ENCODE measurements at regions of chr14 and their contacts with region 1.

Region 1: DNA sequence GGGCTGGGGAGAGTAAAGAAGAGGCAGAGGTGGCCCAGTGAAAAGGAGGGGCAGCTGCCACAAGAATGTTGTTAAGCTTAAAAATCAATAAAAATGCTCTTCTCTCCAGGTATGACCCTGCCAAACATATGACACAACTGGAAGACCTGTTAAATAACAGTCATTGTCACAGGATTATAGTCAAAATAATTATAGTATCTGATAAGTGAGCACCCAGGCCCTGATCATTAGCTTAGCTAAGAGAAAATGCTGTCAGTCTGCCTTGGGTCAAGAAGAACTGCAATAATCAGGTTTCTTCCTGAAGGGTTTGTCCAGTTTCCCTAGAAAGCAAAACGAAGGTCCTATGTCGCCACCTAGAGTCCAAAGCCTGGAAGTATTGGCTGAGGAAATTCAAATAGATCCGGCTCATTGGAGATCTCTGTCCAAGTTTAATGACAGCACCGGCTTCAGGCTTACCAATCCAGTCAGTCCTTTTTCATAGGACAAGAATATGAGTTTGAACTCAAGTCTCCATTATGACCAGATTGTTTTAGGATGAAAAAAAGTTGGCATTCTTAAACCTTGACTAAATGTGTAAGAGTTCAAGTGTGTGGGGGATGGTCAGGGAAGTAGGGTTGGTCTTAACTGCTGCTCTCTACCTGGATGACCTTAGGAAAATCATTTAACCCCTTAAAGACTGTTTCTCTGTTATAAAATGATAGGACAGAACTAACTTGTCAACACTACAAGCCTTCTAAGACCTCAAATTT is 22.5 kb upstream of the NKX2-8 start:
- DNase-seq: peak; percentile 76
- H3K27ac ChIP-seq: no peak overlapping the region
- CTCF ChIP-seq: peak; percentile 82

Region 2: GRCh38 chr14:36505892-36506731 is 98.8 kb before region 1 on chr14:
- CTCF ChIA-PET with region 1: no interaction called
- POLR2A ChIA-PET with region 1: no interaction called
- DNase-seq: no peak
- H3K27ac ChIP-seq: no peak overlapping the region
- CTCF ChIP-seq: no peak

Region 3: DNA sequence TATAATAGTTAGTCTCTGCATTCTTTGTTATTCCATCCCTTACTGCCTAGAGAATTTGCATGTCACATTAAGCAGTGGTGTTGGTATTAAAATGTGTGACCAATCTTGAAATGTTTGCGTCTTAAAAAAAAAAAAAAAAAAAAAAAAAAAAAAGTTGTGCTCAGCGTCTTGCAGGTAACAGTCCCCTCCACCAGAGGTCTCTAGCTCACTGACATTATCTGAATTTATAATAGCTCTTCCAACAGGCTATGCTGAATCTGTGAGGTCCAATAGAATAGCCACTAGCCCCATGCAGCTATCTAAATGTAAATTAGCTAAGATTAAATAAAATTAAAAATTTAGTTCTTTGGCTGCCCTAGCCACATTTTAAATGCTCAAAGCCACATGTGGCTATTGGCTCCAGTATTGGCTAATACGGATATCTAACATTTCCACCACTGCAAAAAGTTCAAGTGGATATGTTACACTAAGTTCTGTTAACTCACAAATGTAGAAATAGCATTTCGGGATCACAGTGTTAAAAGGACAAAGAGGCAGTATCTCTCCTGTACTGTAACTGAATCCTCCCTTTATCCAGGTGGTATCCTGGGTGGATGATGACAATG is 51.2 kb before region 1 on chr14:
- CTCF ChIA-PET with region 1: interaction called, 21 read pairs
- POLR2A ChIA-PET with region 1: no interaction called
- DNase-seq: peak; percentile 55
- H3K27ac ChIP-seq: no peak overlapping the region
- CTCF ChIP-seq: peak; percentile 74

Region 4: GRCh38 chr14:36570065-36570464 is 34.9 kb before region 1 on chr14:
- CTCF ChIA-PET with region 1: no interaction called
- POLR2A ChIA-PET with region 1: no interaction called
- DNase-seq: peak; percentile 8
- H3K27ac ChIP-seq: no peak overlapping the region
- CTCF ChIP-seq: no peak

Measured in RWPE1 (cell line).